ENCODE measurements at regions of chr18 and their contacts with region 1.

Region 1: GRCh38 chr18:8389391-8390340 is 219.6 kb upstream of the RAB12 start:
- DNase-seq: peak; percentile 86
- ATAC-seq: peak; percentile 100
- H3K4me3 ChIP-seq: no peak overlapping the region
- H3K27ac ChIP-seq: no peak overlapping the region
- H3K4me1 ChIP-seq: no peaks in the 10 kb centered on the region
- H3K27me3 ChIP-seq: no peaks in the 10 kb centered on the region
- CTCF ChIP-seq: peak; percentile 97

Region 2: DNA sequence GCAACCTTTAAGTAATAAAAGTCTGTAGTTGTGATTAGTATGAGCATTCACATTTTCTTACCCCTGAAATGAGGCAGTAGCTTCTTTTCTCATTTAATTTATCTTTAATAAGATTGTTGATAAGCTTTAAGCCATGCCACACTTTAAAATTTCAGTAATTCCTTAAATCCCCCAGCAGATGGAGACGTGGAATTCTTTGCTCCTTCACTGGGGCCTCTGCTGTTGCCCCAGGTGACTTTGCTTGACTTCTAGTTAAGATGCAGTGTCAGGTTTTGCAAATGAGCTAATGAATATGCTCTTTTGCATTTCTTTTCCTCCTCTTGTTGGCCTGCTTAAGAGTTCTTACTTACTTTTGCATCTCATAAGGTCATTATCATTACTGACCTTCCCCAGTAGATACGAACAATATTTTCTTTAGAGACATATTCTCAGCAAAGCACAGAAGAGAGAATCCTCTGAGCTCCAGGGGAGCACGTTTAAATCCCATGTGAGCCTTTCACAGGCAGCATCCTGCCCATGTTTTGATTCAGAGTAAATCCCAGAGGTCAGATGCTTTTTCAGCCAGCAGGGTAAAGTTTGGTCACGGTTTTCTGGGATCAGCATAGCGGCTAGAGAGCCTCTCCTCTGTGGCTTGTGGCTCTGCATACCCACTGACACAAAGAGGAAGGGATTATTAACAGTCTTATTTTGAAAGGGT is 599.7 kb before region 1 on chr18:
- CTCF ChIA-PET with region 1: interaction called, 5 read pairs
- POLR2A ChIA-PET with region 1: no interaction called
- intact Hi-C with region 1: loop called (anchors 5 kb)
- DNase-seq: peak; percentile 65
- ATAC-seq: peak; percentile 90
- H3K4me3 ChIP-seq: no peak overlapping the region
- H3K27ac ChIP-seq: no peak overlapping the region
- H3K4me1 ChIP-seq: no peaks in the 10 kb centered on the region
- H3K27me3 ChIP-seq: no peaks in the 10 kb centered on the region
- CTCF ChIP-seq: peak; percentile 84

Region 3: DNA sequence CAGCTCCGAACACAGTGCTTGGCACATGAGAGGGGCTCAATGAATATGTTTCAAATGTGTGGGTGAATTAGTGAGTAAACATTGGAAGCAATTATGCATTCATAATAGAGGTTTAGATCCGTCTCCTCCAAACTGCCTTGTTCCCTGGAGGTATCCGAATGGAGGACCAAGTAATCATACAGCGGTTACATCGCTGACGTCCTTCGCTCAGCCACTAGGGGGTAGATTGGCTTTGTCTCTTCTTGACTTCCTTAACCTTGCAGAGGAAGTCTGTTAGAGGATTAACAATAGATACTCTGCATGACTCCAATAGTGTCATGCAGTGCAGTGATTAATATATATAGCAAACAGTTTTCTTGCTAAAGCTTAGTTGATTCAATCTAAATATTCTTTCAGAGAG is 305.5 kb before region 1 on chr18:
- CTCF ChIA-PET with region 1: no interaction called
- POLR2A ChIA-PET with region 1: no interaction called
- intact Hi-C with region 1: loop called (anchors 1 kb)
- DNase-seq: peak; percentile 82
- ATAC-seq: peak; percentile 97
- H3K4me3 ChIP-seq: no peak overlapping the region
- H3K27ac ChIP-seq: no peak overlapping the region
- H3K4me1 ChIP-seq: peaks cover 4% of the 10 kb centered on the region; the same call in 1 of the 2 replicates
- H3K27me3 ChIP-seq: no peaks in the 10 kb centered on the region
- CTCF ChIP-seq: peak; percentile 93

Region 4: GRCh38 chr18:8177330-8178016 is 212.2 kb before region 1 on chr18:
- CTCF ChIA-PET with region 1: no interaction called
- POLR2A ChIA-PET with region 1: no interaction called
- intact Hi-C with region 1: loop called (anchors 10 kb)
- DNase-seq: peak; percentile 20
- ATAC-seq: peak; percentile 59
- H3K4me3 ChIP-seq: no peak overlapping the region
- H3K27ac ChIP-seq: no peak overlapping the region
- H3K4me1 ChIP-seq: 0 out of 2 replicates have a peak, but pooled peaks cover 6% of the 10 kb centered on the region
- H3K27me3 ChIP-seq: no peaks in the 10 kb centered on the region
- CTCF ChIP-seq: no peak

Region 5: DNA sequence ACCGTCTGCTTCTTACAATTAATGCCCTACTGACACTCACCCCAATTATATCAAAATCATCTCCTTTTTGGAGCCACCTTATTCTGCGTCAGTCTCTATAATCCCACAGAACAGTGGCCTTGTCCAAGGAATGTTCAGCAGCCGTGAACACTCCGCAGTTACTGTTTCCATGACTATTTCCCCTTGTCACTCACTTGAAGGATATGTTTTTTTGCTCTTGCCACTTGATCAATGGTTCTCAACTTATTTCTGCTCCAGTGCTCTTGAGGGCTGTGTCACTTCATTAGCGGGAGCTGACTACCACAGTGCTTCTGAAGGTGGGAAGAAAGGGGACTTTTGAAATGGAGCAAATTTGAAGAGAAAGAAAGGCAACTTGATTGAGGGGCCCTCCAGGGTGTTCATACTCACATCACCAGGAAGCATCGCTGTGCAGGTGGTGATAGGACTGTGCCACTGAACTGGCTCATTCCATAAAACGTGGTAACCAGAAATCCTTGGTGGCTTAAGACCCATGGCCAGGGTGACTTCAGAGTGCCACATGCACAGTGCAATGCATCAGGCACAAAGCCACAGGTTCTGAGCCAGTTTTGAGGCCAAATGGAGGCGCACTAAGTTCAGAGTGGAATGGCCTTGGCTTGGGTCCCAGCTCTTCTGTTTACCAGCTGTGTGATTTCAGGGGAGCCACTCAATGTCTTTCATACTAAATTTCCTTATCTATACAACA is 101.0 kb before region 1 on chr18:
- CTCF ChIA-PET with region 1: no interaction called
- POLR2A ChIA-PET with region 1: no interaction called
- intact Hi-C with region 1: no loop called
- DNase-seq: no peak
- ATAC-seq: no peak
- H3K4me3 ChIP-seq: no peak overlapping the region
- H3K27ac ChIP-seq: no peak overlapping the region
- H3K4me1 ChIP-seq: no peaks in the 10 kb centered on the region
- H3K27me3 ChIP-seq: no peaks in the 10 kb centered on the region
- CTCF ChIP-seq: no peak

Measured in PC-3 (cell line).